ENCODE measurements at regions of chr3 and their contacts with region 1.

Region 1: GRCh38 chr3:158395421-158395820 is 175.6 kb upstream of the MLF1 start:
- DNase-seq: no peak

Region 2: GRCh38 chr3:160084998-160085397 is 1689.6 kb after region 1 on chr3:
- intact Hi-C with region 1: loop called in 1 of 2 experiments (anchors 5 kb)
- DNase-seq: no peak

Measured in posterior vena cava (tissue), 2 donors.